Cardiac septum (tissue), 1 donor: ENCODE measurements at regions of chr1 and their contacts with region 1.

Region 1: GRCh38 chr1:10378081-10378841 is 20.6 kb upstream of the PGD start:
- DNase-seq: peak; percentile 87

Region 2: GRCh38 chr1:10360045-10360444 is 18.2 kb before region 1 on chr1:
- intact Hi-C with region 1: no loop called
- DNase-seq: no peak

Region 3: GRCh38 chr1:10494754-10495474 is 116.7 kb after region 1 on chr1:
- intact Hi-C with region 1: loop called (anchors 5 kb)
- DNase-seq: peak; percentile 87

Region 4: DNA sequence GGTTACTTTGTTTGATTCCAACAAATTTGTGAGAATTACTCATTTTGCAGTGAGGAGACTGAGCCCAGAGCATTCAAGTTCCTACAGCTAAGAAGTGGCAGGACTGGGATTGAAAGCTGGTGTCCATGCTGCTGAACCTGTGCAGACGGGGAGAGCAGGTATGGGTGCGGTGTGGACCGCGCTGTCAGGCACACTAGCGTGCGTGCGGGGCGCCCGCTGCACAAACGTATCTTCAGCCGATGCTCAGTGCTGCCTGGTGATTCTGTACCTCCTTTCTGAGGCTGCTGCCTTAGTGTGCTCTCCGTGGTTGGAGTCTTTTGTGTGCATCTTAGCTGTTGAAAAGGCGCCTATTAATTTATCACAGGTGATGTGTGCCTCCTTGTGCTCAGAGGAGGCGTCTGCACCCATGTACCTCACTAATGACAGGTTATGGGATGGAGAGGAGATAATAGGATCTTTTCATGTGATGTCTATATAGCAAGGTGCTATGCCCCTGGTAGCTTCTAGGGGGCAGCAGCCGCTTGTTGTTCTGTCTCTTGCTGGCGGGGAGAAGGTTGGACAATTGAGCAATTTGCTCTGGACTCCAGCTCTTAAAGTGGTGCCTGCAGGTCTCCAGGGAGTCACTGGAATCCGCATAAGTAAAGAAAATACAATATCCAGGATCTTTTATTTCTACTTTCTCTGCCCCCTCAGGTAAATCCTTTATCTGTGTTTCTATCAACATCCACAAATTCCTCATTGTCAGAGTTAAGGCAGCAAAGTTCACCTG is 129.0 kb after region 1 on chr1:
- intact Hi-C with region 1: no loop called
- DNase-seq: no peak